OCI-LY7 (cell line): ENCODE measurements at regions of chr2 and their contacts with region 1.

Region 1: DNA sequence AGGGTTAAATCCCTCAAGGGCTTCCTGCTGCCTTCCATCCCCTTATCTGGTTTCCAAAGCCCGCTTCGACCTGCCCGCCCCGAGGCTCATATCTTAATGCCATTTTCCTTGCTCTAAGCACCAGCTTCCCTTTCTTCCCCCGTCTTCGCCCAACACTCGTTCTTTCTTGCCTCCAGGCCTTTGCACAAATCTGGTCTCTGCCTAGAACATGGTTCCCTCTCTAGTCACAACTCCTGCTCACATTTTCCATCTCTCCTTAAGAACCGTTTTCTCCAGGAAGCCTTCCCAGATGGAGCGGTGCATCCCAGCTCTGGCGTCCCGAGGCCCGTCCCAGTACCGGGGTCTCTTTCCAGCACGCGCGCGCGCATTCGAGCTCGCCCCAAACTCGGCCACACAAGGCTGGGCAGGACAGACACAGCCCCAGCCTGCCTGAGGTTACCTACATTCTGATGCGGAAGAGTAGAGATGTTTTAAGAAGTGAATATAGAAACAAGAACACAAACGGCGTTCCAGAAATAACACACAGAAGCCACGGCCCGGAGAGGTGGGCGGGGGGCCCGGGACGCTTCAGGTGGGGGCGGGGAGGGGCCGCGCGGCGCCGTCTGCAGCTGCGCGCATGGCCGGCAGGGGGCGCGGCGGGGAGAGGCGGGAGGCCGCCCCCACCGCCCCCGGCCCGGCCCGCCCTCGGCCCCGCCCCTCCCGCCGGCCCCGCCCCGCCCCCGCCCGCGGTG is at the start of gene DGKD:
- DNase-seq: peak; percentile 85
- H3K4me3 ChIP-seq: peak within 1 kb of the TSS; percentile 88
- H3K27ac ChIP-seq: peak within 1 kb of the TSS; percentile 84
- H3K4me1 ChIP-seq: peaks cover 62% of the 10 kb centered on the region
- CTCF ChIP-seq: peak; percentile 51
- total RNA-seq, gene DGKD: 51.3 and 62.9 TPM in 2 replicates

Region 2: GRCh38 chr2:233084488-233084887 is 269.4 kb before region 1 on chr2:
- CTCF ChIA-PET with region 1: no interaction called
- POLR2A ChIA-PET with region 1: interaction called, 5 read pairs
- intact Hi-C with region 1: loop called (anchors 10 kb)
- DNase-seq: peak; percentile 93
- H3K4me3 ChIP-seq: peak overlapping the region; percentile 47
- H3K27ac ChIP-seq: peak overlapping the region; percentile 98
- H3K4me1 ChIP-seq: peaks cover 95% of the 10 kb centered on the region
- CTCF ChIP-seq: no peak

Region 3: DNA sequence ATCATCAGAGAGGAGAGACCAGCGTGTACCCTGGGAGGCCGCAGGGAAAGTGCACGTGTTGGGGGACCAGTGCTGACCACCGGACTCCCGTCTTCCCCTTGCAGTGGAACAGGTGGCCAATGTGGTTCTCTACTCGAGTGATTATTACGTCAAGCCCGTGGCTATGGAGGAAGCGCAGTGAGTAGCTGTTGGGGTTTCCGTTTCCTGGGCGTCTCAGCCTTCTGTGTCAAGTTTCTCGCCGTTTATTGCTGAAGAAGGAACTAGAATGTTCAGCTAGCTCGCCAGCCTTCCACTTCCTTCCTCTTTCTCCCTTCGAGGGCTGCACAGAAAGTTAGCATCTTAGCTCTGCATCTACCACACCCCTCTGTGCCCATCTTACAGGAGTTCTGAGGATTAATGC is 22.4 kb before region 1 on chr2:
- CTCF ChIA-PET with region 1: interaction called, 3 read pairs
- POLR2A ChIA-PET with region 1: interaction called, 9 read pairs
- intact Hi-C with region 1: loop called (anchors 1 kb)
- DNase-seq: peak; percentile 93
- H3K4me3 ChIP-seq: peak overlapping the region; percentile 33
- H3K27ac ChIP-seq: peak overlapping the region; percentile 31
- H3K4me1 ChIP-seq: peaks cover 15% of the 10 kb centered on the region
- CTCF ChIP-seq: no peak

Region 4: DNA sequence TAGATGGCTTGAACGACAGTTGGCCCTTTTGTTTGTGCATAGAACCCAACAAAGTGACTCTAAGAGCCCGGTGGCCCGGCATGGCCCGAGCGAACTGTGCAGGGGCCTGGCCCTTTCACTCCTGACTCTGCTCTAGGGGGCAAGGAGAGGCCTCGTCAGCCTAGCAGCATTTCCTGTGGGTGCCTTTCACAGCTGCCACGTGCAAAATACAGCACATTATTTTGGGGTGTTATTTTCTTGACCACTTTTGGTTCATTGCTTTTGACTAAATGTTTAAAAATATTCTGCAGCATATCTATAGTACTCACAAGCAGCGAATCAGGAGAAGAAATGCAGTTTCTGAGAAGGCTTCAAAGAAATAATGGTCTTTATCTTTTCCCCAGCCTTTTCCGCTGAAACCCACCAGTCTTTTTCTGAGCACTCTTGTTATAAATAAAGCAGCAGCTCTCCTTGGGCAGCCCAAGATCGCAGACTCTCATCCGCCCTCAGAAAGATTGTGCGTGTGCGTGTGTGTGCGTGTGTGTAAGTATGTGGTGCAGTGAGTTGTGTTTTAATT is 31.6 kb after region 1 on chr2:
- CTCF ChIA-PET with region 1: interaction called, 8 read pairs
- POLR2A ChIA-PET with region 1: interaction called, 6 read pairs
- intact Hi-C with region 1: loop called (anchors 1 kb)
- DNase-seq: peak; percentile 72
- H3K4me3 ChIP-seq: peak overlapping the region; percentile 28
- H3K27ac ChIP-seq: peak overlapping the region; percentile 82
- H3K4me1 ChIP-seq: peaks cover 62% of the 10 kb centered on the region
- CTCF ChIP-seq: no peak

Region 5: GRCh38 chr2:233443468-233444183 is 89.7 kb after region 1 on chr2:
- CTCF ChIA-PET with region 1: interaction called, 4 read pairs
- POLR2A ChIA-PET with region 1: no interaction called
- intact Hi-C with region 1: loop called (anchors 1 kb)
- DNase-seq: peak; percentile 86
- H3K4me3 ChIP-seq: no peak overlapping the region
- H3K27ac ChIP-seq: no peak overlapping the region
- H3K4me1 ChIP-seq: no peaks in the 10 kb centered on the region
- CTCF ChIP-seq: peak; percentile 97

Region 6: GRCh38 chr2:233486778-233487552 is 133.0 kb after region 1 on chr2:
- CTCF ChIA-PET with region 1: no interaction called
- POLR2A ChIA-PET with region 1: no interaction called
- intact Hi-C with region 1: no loop called
- DNase-seq: no peak
- H3K4me3 ChIP-seq: no peak overlapping the region
- H3K27ac ChIP-seq: no peak overlapping the region
- H3K4me1 ChIP-seq: no peaks in the 10 kb centered on the region
- CTCF ChIP-seq: no peak

Region 7: DNA sequence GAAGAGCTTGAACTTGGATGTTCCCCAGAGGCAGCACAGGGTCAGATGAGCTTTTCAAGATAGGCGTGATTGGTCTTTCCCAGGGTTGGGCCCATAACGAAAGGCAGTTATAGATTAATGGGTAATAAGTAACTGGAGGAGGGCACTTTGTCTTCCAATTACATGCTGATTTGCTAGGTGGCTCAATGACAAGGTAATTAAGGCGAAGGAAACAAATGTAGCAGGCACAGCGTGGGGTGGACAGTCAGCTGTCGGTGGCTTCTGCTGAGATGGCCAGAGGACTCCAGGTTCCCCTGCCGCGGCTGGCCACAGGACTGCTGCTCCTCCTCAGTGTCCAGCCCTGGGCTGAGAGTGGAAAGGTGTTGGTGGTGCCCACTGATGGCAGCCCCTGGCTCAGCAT is 364.6 kb after region 1 on chr2 and contains the start of gene UGT1A4:
- CTCF ChIA-PET with region 1: no interaction called
- POLR2A ChIA-PET with region 1: no interaction called
- intact Hi-C with region 1: no loop called
- DNase-seq: no peak
- H3K4me3 ChIP-seq: no peak within 1 kb of the TSS
- H3K27ac ChIP-seq: no peak within 1 kb of the TSS
- H3K4me1 ChIP-seq: no peaks in the 10 kb centered on the region
- CTCF ChIP-seq: no peak
- total RNA-seq, gene UGT1A4: not detected in 2 replicates